Psoas muscle (tissue), 8 donors: ENCODE measurements at regions of chr5 and their contacts with region 1.

Region 1: GRCh38 chr5:126776497-126777256 is at the start of gene LMNB1:
- DNase-seq: peak; percentile 95 to 96
- ATAC-seq: peak; percentile 94 to 97 (median 96)
- H3K4me3 ChIP-seq: peak within 1 kb of the TSS; percentile 92
- H3K27ac ChIP-seq: peak within 1 kb of the TSS; percentile 96
- H3K4me1 ChIP-seq: peaks cover 8% of the 10 kb centered on the region
- H3K27me3 ChIP-seq: no peaks in the 10 kb centered on the region
- CTCF ChIP-seq: no peak
- total RNA-seq, gene LMNB1: 1.4 to 4.1 (median 2.1) TPM

Region 2: GRCh38 chr5:126676195-126676624 is 100.5 kb before region 1 on chr5:
- intact Hi-C with region 1: loop called (anchors 2 kb)
- DNase-seq: no peak
- ATAC-seq: peak; percentile 69 to 94 (median 86)
- H3K4me3 ChIP-seq: no peak overlapping the region
- H3K27ac ChIP-seq: no peak overlapping the region
- H3K4me1 ChIP-seq: no peaks in the 10 kb centered on the region
- H3K27me3 ChIP-seq: peaks cover 0 to 3% (median 1%) of the 10 kb centered on the region in 3 donors
- CTCF ChIP-seq: peak; percentile 83

Region 3: GRCh38 chr5:126794157-126794828 is 17.6 kb after region 1 on chr5:
- intact Hi-C with region 1: no loop called
- DNase-seq: no peak
- ATAC-seq: no peak
- H3K4me3 ChIP-seq: no peak overlapping the region
- H3K27ac ChIP-seq: no peak overlapping the region
- H3K4me1 ChIP-seq: no peaks in the 10 kb centered on the region
- H3K27me3 ChIP-seq: no peaks in the 10 kb centered on the region
- CTCF ChIP-seq: no peak